CD4-positive, alpha-beta T cell (primary cell): ENCODE measurements at regions of chr14 and their contacts with region 1.

Region 1: GRCh38 chr14:49767562-49768300 is at the start of gene KLHDC2:
- DNase-seq: peak; percentile 78 to 95 (median 87)
- ATAC-seq: peak; percentile 65
- H3K4me3 ChIP-seq: peak within 1 kb of the TSS; percentile 96
- H3K4me3 Mint-ChIP-seq: peak within 1 kb of the TSS; percentile 100
- H3K27ac ChIP-seq: peak within 1 kb of the TSS; percentile 93 to 95
- H3K27ac Mint-ChIP-seq: peak within 1 kb of the TSS; percentile 99
- H3K4me1 ChIP-seq: peaks cover 35% of the 10 kb centered on the region
- H3K4me1 Mint-ChIP-seq: peaks cover 45% of the 10 kb centered on the region
- H3K27me3 ChIP-seq: no peaks in the 10 kb centered on the region
- H3K27me3 Mint-ChIP-seq: no peaks in the 10 kb centered on the region
- CTCF ChIP-seq: no peak
- total RNA-seq, gene KLHDC2: 142 to 143 TPM

Region 2: GRCh38 chr14:48023881-48024280 is 1743.8 kb before region 1 on chr14:
- CTCF ChIA-PET with region 1: no interaction called
- POLR2A ChIA-PET with region 1: no interaction called
- intact Hi-C with region 1: no loop called
- DNase-seq: no peak
- ATAC-seq: no peak
- H3K4me3 ChIP-seq: no peak overlapping the region
- H3K4me3 Mint-ChIP-seq: no peak overlapping the region
- H3K27ac ChIP-seq: no peak overlapping the region
- H3K27ac Mint-ChIP-seq: no peak overlapping the region
- H3K4me1 ChIP-seq: no peaks in the 10 kb centered on the region
- H3K4me1 Mint-ChIP-seq: no peaks in the 10 kb centered on the region
- H3K27me3 ChIP-seq: no peaks in the 10 kb centered on the region
- H3K27me3 Mint-ChIP-seq: no peaks in the 10 kb centered on the region
- CTCF ChIP-seq: no peak

Region 3: GRCh38 chr14:49438256-49438770 is 329.4 kb before region 1 on chr14:
- CTCF ChIA-PET with region 1: no interaction called
- POLR2A ChIA-PET with region 1: no interaction called
- intact Hi-C with region 1: no loop called
- DNase-seq: no peak
- ATAC-seq: no peak
- H3K4me3 ChIP-seq: no peak overlapping the region
- H3K4me3 Mint-ChIP-seq: no peak overlapping the region
- H3K27ac ChIP-seq: no peak overlapping the region
- H3K27ac Mint-ChIP-seq: no peak overlapping the region
- H3K4me1 ChIP-seq: no peaks in the 10 kb centered on the region
- H3K4me1 Mint-ChIP-seq: no peaks in the 10 kb centered on the region
- H3K27me3 ChIP-seq: no peaks in the 10 kb centered on the region
- H3K27me3 Mint-ChIP-seq: peaks cover 21% of the 10 kb centered on the region
- CTCF ChIP-seq: no peak

Region 4: GRCh38 chr14:49461529-49462401 is 306.0 kb before region 1 on chr14:
- CTCF ChIA-PET with region 1: no interaction called
- POLR2A ChIA-PET with region 1: interaction called, 10 read pairs
- intact Hi-C with region 1: no loop called
- DNase-seq: peak in 13 of 14 experiments; percentile 4 to 86 (median 46)
- ATAC-seq: peak; percentile 97
- H3K4me3 ChIP-seq: no peak overlapping the region
- H3K4me3 Mint-ChIP-seq: no peak overlapping the region
- H3K27ac ChIP-seq: no peak overlapping the region
- H3K27ac Mint-ChIP-seq: no peak overlapping the region
- H3K4me1 ChIP-seq: no peaks in the 10 kb centered on the region
- H3K4me1 Mint-ChIP-seq: no peaks in the 10 kb centered on the region
- H3K27me3 ChIP-seq: no peaks in the 10 kb centered on the region
- H3K27me3 Mint-ChIP-seq: peaks cover 2% of the 10 kb centered on the region
- CTCF ChIP-seq: peak; percentile 73

Region 5: DNA sequence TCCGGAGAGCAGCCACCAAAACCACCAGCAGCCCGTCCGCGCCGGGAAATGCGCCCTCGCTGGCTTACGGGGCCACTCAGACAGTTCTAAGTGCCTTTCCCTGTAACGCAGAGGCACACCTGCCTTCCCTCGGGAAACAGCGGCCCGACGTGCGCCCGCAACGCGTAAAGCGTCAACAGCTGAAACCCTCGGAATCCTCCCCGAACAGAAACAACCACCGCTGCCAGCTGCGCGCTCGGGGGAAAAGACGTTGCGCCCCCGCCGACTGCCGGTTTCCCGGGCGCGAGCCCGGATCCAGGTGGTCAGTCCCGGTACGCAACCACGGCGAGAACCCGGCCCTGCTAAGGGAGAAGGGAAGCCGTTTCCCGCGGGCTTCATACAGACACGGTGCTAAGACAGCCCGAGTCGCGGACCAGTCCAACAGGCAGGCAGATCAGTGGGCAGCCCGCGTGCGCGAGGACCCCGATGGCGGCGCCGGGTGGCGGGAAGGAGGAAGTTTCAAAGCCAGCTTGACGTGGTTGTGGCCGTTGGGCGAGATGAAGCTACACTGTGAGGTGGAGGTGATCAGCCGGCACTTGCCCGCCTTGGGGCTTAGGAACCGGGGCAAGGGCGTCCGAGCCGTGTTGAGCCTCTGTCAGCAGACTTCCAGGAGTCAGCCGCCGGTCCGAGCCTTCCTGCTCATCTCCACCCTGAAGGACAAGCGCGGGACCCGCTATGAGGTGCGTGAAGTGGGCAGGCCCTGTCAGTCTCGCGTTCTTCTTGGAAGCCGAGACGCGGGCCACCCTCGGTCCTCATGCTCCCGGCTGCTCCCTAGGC is 169.0 kb before region 1 on chr14 and contains the start of gene LRR1:
- CTCF ChIA-PET with region 1: interaction called, 3 read pairs
- POLR2A ChIA-PET with region 1: interaction called, 23 read pairs
- intact Hi-C with region 1: loop called in 1 of 2 experiments (anchors 5 kb)
- DNase-seq: peak; percentile 72 to 91 (median 84)
- ATAC-seq: peak; percentile 75
- H3K4me3 ChIP-seq: peak within 1 kb of the TSS; percentile 98
- H3K4me3 Mint-ChIP-seq: peak within 1 kb of the TSS; percentile 97
- H3K27ac ChIP-seq: peak within 1 kb of the TSS; percentile 91 to 95
- H3K27ac Mint-ChIP-seq: peak within 1 kb of the TSS; percentile 98
- H3K4me1 ChIP-seq: peaks cover 13% of the 10 kb centered on the region
- H3K4me1 Mint-ChIP-seq: peaks cover 43% of the 10 kb centered on the region
- H3K27me3 ChIP-seq: no peaks in the 10 kb centered on the region
- H3K27me3 Mint-ChIP-seq: no peaks in the 10 kb centered on the region
- CTCF ChIP-seq: no peak
- total RNA-seq, gene LRR1: 3.2 to 5.8 TPM

Region 6: GRCh38 chr14:49633640-49634546 is 133.8 kb before region 1 on chr14:
- CTCF ChIA-PET with region 1: interaction called, 56 read pairs
- POLR2A ChIA-PET with region 1: interaction called, 142 read pairs
- intact Hi-C with region 1: loop called (anchors 1 to 2 kb)
- DNase-seq: peak; percentile 89 to 97 (median 93)
- ATAC-seq: peak; percentile 82
- H3K4me3 ChIP-seq: peak overlapping the region; percentile 83
- H3K4me3 Mint-ChIP-seq: peak overlapping the region; percentile 98
- H3K27ac ChIP-seq: peak overlapping the region; percentile 97 to 99
- H3K27ac Mint-ChIP-seq: peak overlapping the region; percentile 83
- H3K4me1 ChIP-seq: peaks cover 51% of the 10 kb centered on the region
- H3K4me1 Mint-ChIP-seq: peaks cover 46% of the 10 kb centered on the region
- H3K27me3 ChIP-seq: no peaks in the 10 kb centered on the region
- H3K27me3 Mint-ChIP-seq: no peaks in the 10 kb centered on the region
- CTCF ChIP-seq: peak; percentile 86

Region 7: GRCh38 chr14:49786315-49787110 is 18.8 kb after region 1 on chr14:
- CTCF ChIA-PET with region 1: no interaction called
- POLR2A ChIA-PET with region 1: interaction called, 22 read pairs
- intact Hi-C with region 1: no loop called
- DNase-seq: no peak
- ATAC-seq: no peak
- H3K4me3 ChIP-seq: no peak overlapping the region
- H3K4me3 Mint-ChIP-seq: no peak overlapping the region
- H3K27ac ChIP-seq: no peak overlapping the region
- H3K27ac Mint-ChIP-seq: no peak overlapping the region
- H3K4me1 ChIP-seq: no peaks in the 10 kb centered on the region
- H3K4me1 Mint-ChIP-seq: peaks cover 5% of the 10 kb centered on the region
- H3K27me3 ChIP-seq: no peaks in the 10 kb centered on the region
- H3K27me3 Mint-ChIP-seq: no peaks in the 10 kb centered on the region
- CTCF ChIP-seq: no peak

Region 8: DNA sequence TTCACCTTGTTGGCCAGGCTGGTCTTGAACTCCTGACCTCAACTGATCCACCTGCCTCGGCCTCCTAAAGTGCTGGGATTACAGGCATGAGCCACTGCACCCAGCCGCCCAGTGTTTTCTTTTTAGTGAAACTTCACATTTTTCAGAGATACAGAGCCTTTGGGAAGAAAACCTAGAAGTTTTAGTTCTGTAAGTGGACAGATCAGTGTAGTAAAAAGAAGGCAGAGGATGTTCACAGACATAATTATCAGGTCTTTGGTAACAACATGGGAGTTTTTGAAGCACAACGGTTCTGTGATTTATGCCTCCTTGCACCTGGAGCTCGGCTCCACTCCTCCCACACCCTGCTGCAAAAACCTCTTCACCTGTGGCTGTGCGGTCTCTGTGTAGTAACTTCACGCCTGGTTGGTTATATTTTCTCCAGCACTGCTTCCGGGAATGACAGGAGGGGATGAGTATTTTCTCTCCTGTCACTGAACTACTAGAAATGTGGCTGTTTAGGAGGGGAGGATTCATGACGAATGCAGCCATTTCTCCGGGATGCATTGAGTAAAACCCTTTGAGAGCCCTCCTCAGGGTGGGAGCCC is 192.2 kb after region 1 on chr14:
- CTCF ChIA-PET with region 1: no interaction called
- POLR2A ChIA-PET with region 1: no interaction called
- intact Hi-C with region 1: no loop called
- DNase-seq: peak in 6 of 14 experiments; percentile 17 to 60 (median 56)
- ATAC-seq: peak; percentile 83
- H3K4me3 ChIP-seq: no peak overlapping the region
- H3K4me3 Mint-ChIP-seq: peak overlapping the region; percentile 0
- H3K27ac ChIP-seq: no peak overlapping the region
- H3K27ac Mint-ChIP-seq: peak overlapping the region; percentile 66
- H3K4me1 ChIP-seq: peaks cover 13% of the 10 kb centered on the region
- H3K4me1 Mint-ChIP-seq: peaks cover 22% of the 10 kb centered on the region
- H3K27me3 ChIP-seq: no peaks in the 10 kb centered on the region
- H3K27me3 Mint-ChIP-seq: no peaks in the 10 kb centered on the region
- CTCF ChIP-seq: no peak

Region 9: GRCh38 chr14:50116181-50116956 is 348.6 kb after region 1 on chr14 and contains the start of gene VCPKMT:
- CTCF ChIA-PET with region 1: interaction called, 3 read pairs
- POLR2A ChIA-PET with region 1: interaction called, 23 read pairs
- intact Hi-C with region 1: loop called in 1 of 2 experiments (anchors 5 kb)
- DNase-seq: peak; percentile 90 to 98 (median 96)
- ATAC-seq: peak; percentile 98
- H3K4me3 ChIP-seq: peak within 1 kb of the TSS; percentile 75
- H3K4me3 Mint-ChIP-seq: peak within 1 kb of the TSS; percentile 99
- H3K27ac ChIP-seq: peak within 1 kb of the TSS; percentile 81 to 95
- H3K27ac Mint-ChIP-seq: peak within 1 kb of the TSS; percentile 99
- H3K4me1 ChIP-seq: peaks cover 15% of the 10 kb centered on the region
- H3K4me1 Mint-ChIP-seq: peaks cover 31% of the 10 kb centered on the region
- H3K27me3 ChIP-seq: no peaks in the 10 kb centered on the region
- H3K27me3 Mint-ChIP-seq: no peaks in the 10 kb centered on the region
- CTCF ChIP-seq: no peak
- total RNA-seq, gene VCPKMT: 30.4 to 32.4 TPM